Activated CD4-positive, alpha-beta memory T cell treated with anti-CD3 and anti-CD28 coated beads for 36 hours (primary cell): ENCODE measurements at regions of chr9 and their contacts with region 1.

Region 1: GRCh38 chr9:95726756-95727155 is 148.7 kb upstream of the ERCC6L2 start:
- DNase-seq: no peak
- H3K4me3 Mint-ChIP-seq: no peak overlapping the region
- H3K27ac Mint-ChIP-seq: no peak overlapping the region
- H3K4me1 Mint-ChIP-seq: peaks cover 38% of the 10 kb centered on the region
- H3K27me3 Mint-ChIP-seq: peaks cover 15% of the 10 kb centered on the region

Region 2: DNA sequence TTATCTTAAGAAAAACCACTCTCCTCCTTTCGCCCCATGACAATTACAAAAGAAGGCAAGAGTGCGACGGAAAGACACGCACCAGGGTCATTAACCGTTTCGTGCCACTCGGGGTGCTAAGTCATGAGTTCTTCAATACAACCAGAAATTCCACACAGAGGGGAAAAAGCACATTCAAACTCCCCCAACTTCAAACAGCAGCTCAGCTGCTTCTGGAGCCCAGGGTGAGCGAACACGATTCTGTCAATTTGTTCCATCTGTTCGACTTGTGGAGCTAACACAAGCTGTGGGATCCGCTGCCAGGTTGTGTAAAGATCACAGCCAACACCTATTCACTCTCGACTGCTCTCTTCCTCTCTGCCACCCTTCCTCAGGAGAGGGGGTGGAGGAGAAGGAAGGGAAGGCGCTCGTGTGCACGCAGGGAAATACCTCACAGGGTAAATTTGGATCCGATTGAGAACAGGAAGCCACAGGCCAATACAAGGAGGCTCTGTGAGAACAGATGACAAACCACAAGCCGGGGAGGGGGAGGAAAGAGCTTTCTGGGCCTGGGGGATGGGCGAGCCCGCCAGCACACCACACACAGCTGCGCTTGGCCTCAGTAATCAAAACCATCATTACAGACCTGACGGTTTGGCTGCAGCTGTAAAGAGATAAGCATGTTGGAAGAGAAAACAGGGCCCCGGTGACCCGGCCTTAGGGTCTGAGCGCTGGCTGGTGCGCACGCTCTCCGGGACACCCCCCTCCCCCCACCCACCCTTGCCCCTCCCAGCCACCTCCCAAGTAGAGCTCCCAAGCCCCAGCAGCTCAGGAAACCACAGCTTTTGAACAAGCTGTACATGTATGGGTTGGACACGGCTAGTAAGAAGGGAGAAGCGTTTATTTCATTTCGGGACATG is 264.3 kb before region 1 on chr9:
- CTCF ChIA-PET with region 1: no interaction called
- POLR2A ChIA-PET with region 1: no interaction called
- intact Hi-C with region 1: loop called (anchors 1 kb)
- DNase-seq: peak; percentile 88
- H3K4me3 Mint-ChIP-seq: peak overlapping the region; percentile 75
- H3K27ac Mint-ChIP-seq: peak overlapping the region; percentile 69
- H3K4me1 Mint-ChIP-seq: peaks cover 24% of the 10 kb centered on the region
- H3K27me3 Mint-ChIP-seq: no peaks in the 10 kb centered on the region

Region 3: GRCh38 chr9:95750725-95751517 is 24.2 kb after region 1 on chr9:
- CTCF ChIA-PET with region 1: no interaction called
- POLR2A ChIA-PET with region 1: no interaction called
- intact Hi-C with region 1: loop called (anchors 1 kb)
- DNase-seq: peak; percentile 60
- H3K4me3 Mint-ChIP-seq: no peak overlapping the region
- H3K27ac Mint-ChIP-seq: no peak overlapping the region
- H3K4me1 Mint-ChIP-seq: peaks cover 11% of the 10 kb centered on the region
- H3K27me3 Mint-ChIP-seq: peaks cover 12% of the 10 kb centered on the region

Region 4: GRCh38 chr9:95862343-95862742 is 135.6 kb after region 1 on chr9:
- CTCF ChIA-PET with region 1: no interaction called
- POLR2A ChIA-PET with region 1: no interaction called
- intact Hi-C with region 1: no loop called
- DNase-seq: no peak
- H3K4me3 Mint-ChIP-seq: no peak overlapping the region
- H3K27ac Mint-ChIP-seq: no peak overlapping the region
- H3K4me1 Mint-ChIP-seq: peaks cover 14% of the 10 kb centered on the region
- H3K27me3 Mint-ChIP-seq: no peaks in the 10 kb centered on the region

Region 5: GRCh38 chr9:95875305-95876137 is 148.8 kb after region 1 on chr9 and contains the start of gene ERCC6L2:
- CTCF ChIA-PET with region 1: no interaction called
- POLR2A ChIA-PET with region 1: no interaction called
- intact Hi-C with region 1: loop called (anchors 2 kb)
- DNase-seq: peak; percentile 97
- H3K4me3 Mint-ChIP-seq: no peak within 1 kb of the TSS
- H3K27ac Mint-ChIP-seq: no peak within 1 kb of the TSS
- H3K4me1 Mint-ChIP-seq: peaks cover 28% of the 10 kb centered on the region
- H3K27me3 Mint-ChIP-seq: no peaks in the 10 kb centered on the region
- total RNA-seq, gene ERCC6L2: 23.1 to 25.1 TPM

Region 6: DNA sequence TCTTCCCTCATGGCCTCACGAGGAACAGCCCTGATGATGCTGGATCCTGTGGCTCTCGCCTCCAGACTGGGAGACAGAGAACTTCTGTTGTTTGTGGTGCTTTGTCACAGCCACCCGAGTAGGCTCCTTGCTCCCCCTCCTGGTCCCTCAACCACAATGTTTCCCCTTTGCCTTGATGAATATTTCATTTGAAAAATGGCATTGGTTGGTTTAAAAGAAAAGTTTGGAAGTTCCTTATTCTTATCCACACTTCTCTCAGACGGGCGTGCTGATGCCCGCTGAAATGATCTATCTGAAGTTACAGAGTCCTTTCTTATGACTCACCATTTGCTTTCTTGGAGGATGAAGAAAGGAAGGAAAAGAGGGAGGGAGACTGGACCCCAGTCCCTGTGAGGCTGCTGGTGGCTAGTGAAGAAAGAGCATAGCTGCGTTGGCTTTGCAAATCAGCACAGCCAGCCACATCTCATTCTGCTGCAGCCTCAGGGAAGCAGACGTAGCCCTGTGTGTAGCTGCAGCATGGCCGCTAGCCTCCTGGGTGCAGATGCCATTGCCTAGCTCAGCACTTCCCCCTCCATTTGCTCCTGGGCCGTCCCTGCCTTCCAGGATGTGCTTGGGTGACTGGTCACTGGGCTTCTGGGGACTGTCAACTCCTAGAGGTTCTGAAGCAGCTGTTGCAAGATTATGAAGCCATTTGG is 334.7 kb after region 1 on chr9:
- CTCF ChIA-PET with region 1: interaction called, 4 read pairs
- POLR2A ChIA-PET with region 1: no interaction called
- intact Hi-C with region 1: loop called (anchors 5 kb)
- DNase-seq: peak; percentile 57
- H3K4me3 Mint-ChIP-seq: no peak overlapping the region
- H3K27ac Mint-ChIP-seq: no peak overlapping the region
- H3K4me1 Mint-ChIP-seq: peaks cover 16% of the 10 kb centered on the region
- H3K27me3 Mint-ChIP-seq: no peaks in the 10 kb centered on the region

Region 7: DNA sequence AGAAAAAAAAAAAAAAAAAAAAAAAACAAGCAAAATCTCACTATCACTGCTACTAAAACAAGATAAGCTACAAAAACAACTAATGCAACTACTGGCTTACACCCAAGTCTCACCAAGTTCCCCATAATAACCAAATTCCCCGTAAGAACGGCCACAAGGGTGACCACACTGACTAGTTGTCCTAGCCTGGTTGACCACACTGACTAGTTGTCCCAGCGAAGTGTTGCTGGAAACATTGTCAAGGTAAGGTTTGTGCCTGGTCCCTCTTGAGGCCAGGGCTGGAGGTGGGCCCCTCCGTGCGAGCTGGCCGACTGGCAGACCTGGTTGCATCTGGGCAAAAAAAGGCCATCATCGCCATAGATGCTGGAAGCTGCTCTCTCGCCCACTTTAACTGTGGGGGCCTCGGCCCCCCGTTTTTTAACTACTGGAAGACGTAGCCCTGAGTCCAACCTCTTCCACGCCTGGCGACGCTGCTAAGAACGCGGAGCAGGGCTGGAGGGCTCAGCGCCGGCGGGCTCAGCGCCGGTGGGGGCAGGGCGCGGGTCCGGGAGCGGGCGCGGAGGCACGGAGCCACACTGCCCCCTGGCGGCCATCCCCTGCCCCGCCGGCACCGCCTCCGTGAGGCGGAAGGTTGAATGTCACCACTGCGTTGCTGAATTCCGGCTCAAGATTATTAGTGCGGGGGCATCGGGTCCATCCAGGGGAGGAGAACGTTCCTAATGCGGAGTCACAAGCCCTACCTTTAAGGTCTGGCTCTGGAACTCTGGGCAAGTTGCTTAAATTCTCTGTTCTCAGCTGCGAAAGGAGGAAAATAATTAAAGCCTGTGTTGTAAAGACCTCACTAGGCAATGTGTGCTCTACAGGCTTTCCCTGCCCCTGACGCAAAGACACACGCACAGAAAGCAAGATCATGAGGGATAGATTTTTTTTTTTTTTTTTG is 491.3 kb after region 1 on chr9:
- CTCF ChIA-PET with region 1: interaction called, 6 read pairs
- POLR2A ChIA-PET with region 1: no interaction called
- intact Hi-C with region 1: loop called (anchors 10 kb)
- DNase-seq: peak; percentile 77
- H3K4me3 Mint-ChIP-seq: peak overlapping the region; percentile 48
- H3K27ac Mint-ChIP-seq: no peak overlapping the region
- H3K4me1 Mint-ChIP-seq: peaks cover 16% of the 10 kb centered on the region
- H3K27me3 Mint-ChIP-seq: peaks cover 52% of the 10 kb centered on the region